Right ventricle myocardium inferior (tissue), 1 donor: ENCODE measurements at regions of chr22 and their contacts with region 1.

Region 1: GRCh38 chr22:26321469-26321913 is 107.6 kb upstream of the ASPHD2 start:
- DNase-seq: no peak
- ATAC-seq: peak; percentile 90

Region 2: GRCh38 chr22:25777870-25778269 is 543.6 kb before region 1 on chr22:
- intact Hi-C with region 1: loop called (anchors 10 kb)
- DNase-seq: no peak
- ATAC-seq: no peak

Region 3: GRCh38 chr22:26172389-26172990 is 149.0 kb before region 1 on chr22:
- intact Hi-C with region 1: no loop called
- DNase-seq: no peak
- ATAC-seq: no peak

Region 4: GRCh38 chr22:26416670-26417250 is 95.3 kb after region 1 on chr22:
- intact Hi-C with region 1: no loop called
- DNase-seq: no peak
- ATAC-seq: no peak

Region 5: DNA sequence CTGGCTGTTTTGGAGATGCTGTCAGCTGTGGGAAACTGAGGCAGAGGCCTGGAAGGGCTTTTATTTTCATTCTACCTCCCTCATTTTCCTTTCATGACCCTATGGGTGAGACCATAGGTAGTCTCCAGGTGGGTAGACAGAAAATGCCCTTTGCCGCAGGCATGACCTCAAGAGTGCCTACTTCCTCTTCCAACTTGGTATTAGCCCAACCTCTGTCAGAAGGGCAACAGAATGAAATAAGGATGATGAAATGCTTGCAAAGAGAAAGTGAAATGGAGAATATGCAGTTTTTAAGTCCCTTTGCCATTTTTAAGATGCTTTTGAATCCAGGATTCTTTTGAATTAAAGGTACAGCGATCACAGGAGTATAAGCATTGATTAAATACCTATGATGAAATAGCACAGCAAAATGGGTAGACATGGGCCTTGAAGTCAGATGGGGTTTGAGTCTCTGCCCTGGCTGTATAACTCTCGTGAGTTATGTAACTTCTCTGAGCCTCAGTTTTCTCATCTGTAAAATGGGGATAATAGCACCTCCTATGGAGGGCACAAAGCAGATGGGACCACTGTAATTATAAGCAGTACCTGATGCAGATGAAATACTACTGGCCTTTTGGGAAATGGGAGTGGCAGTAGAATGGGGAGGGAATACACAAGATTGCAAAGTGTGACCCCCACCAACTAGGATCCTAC is 111.3 kb after region 1 on chr22:
- intact Hi-C with region 1: no loop called
- DNase-seq: no peak
- ATAC-seq: no peak